ENCODE measurements at regions of chr22 and their contacts with region 1.

Region 1: GRCh38 chr22:25334162-25334490 is 114.7 kb downstream of the CRYBB2 start:
- DNase-seq: peak; percentile 85
- ATAC-seq: peak; percentile 90
- H3K4me3 Mint-ChIP-seq: no peak overlapping the region
- H3K27ac Mint-ChIP-seq: no peak overlapping the region
- H3K4me1 Mint-ChIP-seq: no peaks in the 10 kb centered on the region
- H3K27me3 Mint-ChIP-seq: no peaks in the 10 kb centered on the region

Region 2: GRCh38 chr22:25202290-25202921 is 131.7 kb before region 1 on chr22:
- CTCF ChIA-PET with region 1: interaction called, 5 read pairs
- POLR2A ChIA-PET with region 1: no interaction called
- intact Hi-C with region 1: loop called (anchors 1 to 10 kb)
- DNase-seq: peak; percentile 75
- ATAC-seq: peak; percentile 60
- H3K4me3 Mint-ChIP-seq: no peak overlapping the region
- H3K27ac Mint-ChIP-seq: no peak overlapping the region
- H3K4me1 Mint-ChIP-seq: no peaks in the 10 kb centered on the region
- H3K27me3 Mint-ChIP-seq: no peaks in the 10 kb centered on the region